H1 (cell line): ENCODE measurements at regions of chr10 and their contacts with region 1.

Region 1: DNA sequence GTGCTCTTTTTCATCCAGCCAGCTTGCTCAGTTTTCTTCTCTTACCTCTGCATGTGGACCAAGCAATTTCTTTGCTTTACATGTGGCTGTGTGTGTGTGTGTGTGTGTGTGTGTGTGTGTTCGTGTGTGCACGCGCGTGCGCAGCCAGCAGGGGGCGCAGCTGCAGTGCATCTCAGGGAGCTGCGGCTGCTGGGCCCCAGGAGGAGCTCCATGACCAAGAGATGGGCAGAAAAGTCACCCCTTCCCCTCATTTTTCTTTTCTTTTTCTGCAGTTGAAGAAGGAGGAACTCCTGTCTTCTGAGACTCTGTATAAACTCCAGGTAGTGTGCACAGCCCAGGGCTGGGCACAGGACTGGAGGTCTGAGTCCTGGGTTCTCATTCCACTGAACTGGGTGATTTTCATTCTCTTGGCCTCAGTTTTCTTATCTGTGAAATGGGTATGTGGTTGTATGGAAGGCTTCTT is 41.8 kb downstream of the BLNK start:
- DNase-seq: peak; percentile 61 to 86
- H3K4me3 ChIP-seq: no peak overlapping the region
- H3K27ac ChIP-seq: no peak overlapping the region
- H3K4me1 ChIP-seq: peaks cover 0 to 2% (median under 1%) of the 10 kb centered on the region in 4 experiments; a peak in 2 of 7 replicates
- H3K27me3 ChIP-seq: no peaks in the 10 kb centered on the region
- CTCF ChIP-seq: peak; percentile 94 to 99 (median 97)
- EP300 ChIP-seq: 0 out of 3 replicates have a peak, but pooled peaks of 1 of the 2 experiments have one; percentile 15
- POLR2A ChIP-seq: no peak
- RAD21 ChIP-seq: peak; percentile 90 to 92

Region 2: GRCh38 chr10:96208271-96208670 is 21.3 kb before region 1 on chr10:
- CTCF ChIA-PET with region 1: interaction called, 29 read pairs
- POLR2A ChIA-PET with region 1: no interaction called
- DNase-seq: no peak
- H3K4me3 ChIP-seq: no peak overlapping the region
- H3K27ac ChIP-seq: no peak overlapping the region
- H3K4me1 ChIP-seq: peaks cover 4 to 7% (median 5%) of the 10 kb centered on the region in 4 experiments; a peak in 6 of 7 replicates
- H3K27me3 ChIP-seq: no peaks in the 10 kb centered on the region
- CTCF ChIP-seq: no peak
- EP300 ChIP-seq: no peak
- POLR2A ChIP-seq: no peak
- RAD21 ChIP-seq: no peak

Region 3: DNA sequence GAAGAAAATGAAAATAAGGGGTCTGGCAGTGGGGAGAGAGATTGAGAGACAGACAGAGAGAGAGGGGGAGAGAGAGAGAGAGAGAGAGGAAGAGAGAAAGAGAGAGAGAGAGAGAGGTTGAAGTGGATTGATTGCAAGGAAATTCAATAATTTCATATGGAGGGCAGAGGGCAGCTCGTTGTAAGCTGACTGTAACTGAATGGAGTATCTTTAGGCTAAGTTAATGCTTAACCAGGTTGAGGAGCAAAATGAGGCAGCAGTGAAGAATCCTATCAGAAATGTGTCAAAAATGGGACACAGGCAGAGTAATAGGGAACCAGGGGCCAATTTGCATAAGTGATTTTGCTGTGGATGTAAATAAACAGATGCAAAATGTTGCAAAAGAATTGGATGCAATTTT is 20.8 kb after region 1 on chr10:
- CTCF ChIA-PET with region 1: interaction called, 16 read pairs
- POLR2A ChIA-PET with region 1: interaction called, 3 read pairs
- DNase-seq: no peak
- H3K4me3 ChIP-seq: no peak overlapping the region
- H3K27ac ChIP-seq: no peak overlapping the region
- H3K4me1 ChIP-seq: no peaks in the 10 kb centered on the region; a peak in 1 of 7 replicates
- H3K27me3 ChIP-seq: no peaks in the 10 kb centered on the region; a peak in 1 of 7 replicates
- CTCF ChIP-seq: no peak
- EP300 ChIP-seq: no peak
- POLR2A ChIP-seq: no peak
- RAD21 ChIP-seq: no peak

Region 4: DNA sequence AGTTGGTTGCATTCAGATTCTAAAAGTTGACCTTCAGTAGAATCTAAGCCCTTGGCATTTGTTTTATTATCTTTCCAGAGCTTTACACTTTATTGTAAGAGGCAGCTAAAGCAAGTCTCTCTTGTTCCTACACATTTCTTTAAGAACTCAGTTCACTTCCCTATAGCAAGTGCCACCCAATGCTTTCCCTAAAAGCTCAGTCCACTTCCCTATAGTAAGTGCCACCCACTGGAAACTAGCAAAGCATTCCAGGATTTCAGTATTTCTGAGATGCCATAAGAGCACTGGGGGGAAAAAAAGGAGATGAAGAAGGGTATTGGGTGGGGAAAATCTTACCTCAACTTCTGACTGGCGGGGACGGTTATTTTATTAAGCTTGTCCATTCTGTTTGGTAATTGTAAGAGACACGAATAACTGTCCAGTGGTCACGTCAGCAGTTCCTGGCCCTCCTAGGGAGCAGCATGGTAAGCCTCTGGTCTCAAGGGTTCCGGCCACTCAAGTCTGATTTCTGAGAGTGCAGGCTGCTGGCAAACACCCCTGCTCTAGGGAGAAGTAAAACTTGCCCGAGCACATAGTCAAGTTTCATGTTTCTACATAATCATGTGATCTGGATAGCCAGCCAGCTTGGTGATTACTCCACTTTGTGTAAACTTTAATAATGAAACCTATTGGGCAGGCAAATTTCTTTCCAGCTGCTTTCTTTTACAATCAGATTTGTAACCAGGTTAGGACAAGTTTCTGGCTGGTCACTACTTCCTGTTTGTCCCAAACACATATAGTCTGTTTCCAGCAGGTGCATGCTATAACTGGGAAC is 41.6 kb after region 1 on chr10 and contains the start of gene BLNK:
- CTCF ChIA-PET with region 1: interaction called, 26 read pairs
- POLR2A ChIA-PET with region 1: interaction called, 3 read pairs
- DNase-seq: no peak
- H3K4me3 ChIP-seq: no peak within 1 kb of the TSS
- H3K27ac ChIP-seq: no peak within 1 kb of the TSS
- H3K4me1 ChIP-seq: no peaks in the 10 kb centered on the region
- H3K27me3 ChIP-seq: no peaks in the 10 kb centered on the region
- CTCF ChIP-seq: no peak
- EP300 ChIP-seq: no peak
- POLR2A ChIP-seq: no peak
- RAD21 ChIP-seq: no peak
- total RNA-seq, gene BLNK: not detected in 2 replicates

Region 5: DNA sequence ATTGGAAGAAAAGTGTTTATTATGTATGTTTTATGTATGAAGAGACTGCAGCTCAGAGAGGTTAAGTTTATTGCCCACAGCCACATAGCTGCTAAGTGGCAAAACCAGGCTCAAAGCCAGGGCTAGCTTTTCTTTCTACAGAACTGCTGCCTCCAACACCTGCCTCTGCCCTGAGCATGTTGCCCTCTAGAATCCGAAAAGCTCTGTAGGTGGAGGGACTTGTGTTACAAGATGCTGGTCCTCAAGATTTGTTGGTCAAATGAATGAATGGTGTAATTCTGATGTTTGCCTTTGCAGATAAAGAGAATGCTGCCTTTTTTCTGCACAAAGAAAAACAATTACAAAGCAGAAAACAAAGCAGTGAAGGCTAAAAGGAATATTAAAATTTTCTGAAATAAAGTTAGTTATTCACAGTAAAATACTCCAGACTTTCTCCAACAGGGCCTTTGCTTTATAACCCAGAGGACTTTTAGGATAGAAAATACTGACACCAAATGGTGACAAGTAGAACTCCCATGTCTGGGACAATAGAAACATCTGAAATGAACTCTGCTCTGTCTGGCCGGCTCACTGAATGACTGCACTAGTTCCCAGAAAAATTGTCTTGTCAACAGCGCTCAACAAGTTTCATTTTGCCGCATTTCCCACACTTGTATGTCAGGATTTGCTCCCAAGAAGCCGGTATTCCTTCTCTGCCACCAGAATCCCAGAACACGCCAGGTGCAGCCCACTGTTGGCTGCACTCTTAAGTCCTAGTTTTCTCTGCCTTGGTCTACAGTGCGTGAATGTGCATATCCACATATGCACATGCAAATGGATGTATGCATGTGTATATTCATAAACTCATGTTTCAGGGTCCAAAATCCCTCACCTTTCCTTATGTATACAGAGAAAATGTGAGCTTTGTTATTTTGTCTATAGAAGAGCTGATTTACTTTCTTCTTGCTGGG is 63.6 kb after region 1 on chr10:
- CTCF ChIA-PET with region 1: interaction called, 151 read pairs
- POLR2A ChIA-PET with region 1: interaction called, 3 read pairs
- DNase-seq: no peak
- H3K4me3 ChIP-seq: no peak overlapping the region
- H3K27ac ChIP-seq: no peak overlapping the region
- H3K4me1 ChIP-seq: no peaks in the 10 kb centered on the region
- H3K27me3 ChIP-seq: no peaks in the 10 kb centered on the region
- CTCF ChIP-seq: peak in 2 of 3 experiments; percentile 58 to 61; a peak in 3 of 4 replicates
- EP300 ChIP-seq: no peak
- POLR2A ChIP-seq: no peak
- RAD21 ChIP-seq: peak; percentile 68 to 82

Region 6: GRCh38 chr10:96306516-96306915 is 76.9 kb after region 1 on chr10:
- CTCF ChIA-PET with region 1: interaction called, 10 read pairs
- POLR2A ChIA-PET with region 1: no interaction called
- DNase-seq: no peak
- H3K4me3 ChIP-seq: no peak overlapping the region
- H3K27ac ChIP-seq: no peak overlapping the region
- H3K4me1 ChIP-seq: peaks cover 3 to 24% (median 22%) of the 10 kb centered on the region in 4 experiments
- H3K27me3 ChIP-seq: no peaks in the 10 kb centered on the region
- CTCF ChIP-seq: no peak
- EP300 ChIP-seq: no peak
- POLR2A ChIP-seq: no peak
- RAD21 ChIP-seq: no peak

Region 7: DNA sequence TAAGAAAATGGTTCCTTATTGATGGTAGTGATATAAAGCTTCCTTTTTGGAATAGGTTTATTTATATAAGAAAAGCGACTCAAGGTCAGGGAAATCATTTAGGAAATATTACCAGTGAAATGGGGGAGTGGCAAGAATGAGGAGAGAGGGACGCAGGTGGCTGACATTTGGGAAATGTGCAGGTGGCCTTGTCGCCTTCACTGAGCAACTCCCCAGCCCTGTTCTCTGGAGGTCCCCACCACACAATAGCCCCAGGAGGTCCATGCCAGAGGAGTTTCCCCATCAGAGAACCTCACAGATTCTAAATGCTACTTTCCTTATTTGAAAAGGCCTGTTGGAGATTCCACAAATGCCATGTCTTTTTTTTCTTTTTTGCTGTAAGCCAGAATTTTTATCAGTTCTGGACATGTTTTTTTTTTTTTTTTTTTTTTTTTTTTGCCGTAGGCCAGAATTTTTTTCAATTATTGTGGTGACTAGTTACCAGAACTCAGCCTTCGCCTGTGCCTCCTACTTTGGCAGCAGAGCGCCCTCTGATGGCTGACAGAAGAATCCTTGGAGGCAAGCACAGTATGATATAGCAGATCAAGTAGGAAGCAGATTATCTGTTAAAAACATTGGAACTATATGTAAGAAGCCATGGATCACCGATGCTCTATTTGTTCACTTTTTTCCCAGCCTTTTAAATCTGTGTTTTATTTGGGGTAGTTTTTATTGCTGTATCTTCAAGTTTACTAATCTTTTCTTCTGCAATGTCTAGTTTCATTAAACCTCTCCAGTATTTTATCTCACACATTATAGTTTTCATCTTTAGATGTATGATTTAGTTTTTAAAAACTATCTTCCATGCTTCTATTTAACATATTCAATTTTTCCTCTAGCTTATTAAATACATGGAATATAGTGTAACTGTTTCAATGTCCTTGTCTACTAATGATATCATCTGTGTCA is 110.6 kb after region 1 on chr10:
- CTCF ChIA-PET with region 1: interaction called, 79 read pairs
- POLR2A ChIA-PET with region 1: interaction called, 3 read pairs
- DNase-seq: peak in 1 of 2 experiments; percentile 74
- H3K4me3 ChIP-seq: no peak overlapping the region
- H3K27ac ChIP-seq: no peak overlapping the region
- H3K4me1 ChIP-seq: peaks cover 0 to 14% (median 10%) of the 10 kb centered on the region in 4 experiments; a peak in 6 of 7 replicates
- H3K27me3 ChIP-seq: peaks cover 0 to 1% (median 0%) of the 10 kb centered on the region in 4 experiments; a peak in 1 of 7 replicates
- CTCF ChIP-seq: peak; percentile 71 to 80 (median 80)
- EP300 ChIP-seq: no peak
- POLR2A ChIP-seq: no peak
- RAD21 ChIP-seq: peak; percentile 70 to 75

Region 8: GRCh38 chr10:96555330-96555729 is 325.7 kb after region 1 on chr10:
- CTCF ChIA-PET with region 1: no interaction called
- POLR2A ChIA-PET with region 1: no interaction called
- DNase-seq: no peak
- H3K4me3 ChIP-seq: no peak overlapping the region
- H3K27ac ChIP-seq: no peak overlapping the region
- H3K4me1 ChIP-seq: no peaks in the 10 kb centered on the region
- H3K27me3 ChIP-seq: no peaks in the 10 kb centered on the region
- CTCF ChIP-seq: no peak
- EP300 ChIP-seq: no peak
- POLR2A ChIP-seq: no peak
- RAD21 ChIP-seq: no peak

Region 9: DNA sequence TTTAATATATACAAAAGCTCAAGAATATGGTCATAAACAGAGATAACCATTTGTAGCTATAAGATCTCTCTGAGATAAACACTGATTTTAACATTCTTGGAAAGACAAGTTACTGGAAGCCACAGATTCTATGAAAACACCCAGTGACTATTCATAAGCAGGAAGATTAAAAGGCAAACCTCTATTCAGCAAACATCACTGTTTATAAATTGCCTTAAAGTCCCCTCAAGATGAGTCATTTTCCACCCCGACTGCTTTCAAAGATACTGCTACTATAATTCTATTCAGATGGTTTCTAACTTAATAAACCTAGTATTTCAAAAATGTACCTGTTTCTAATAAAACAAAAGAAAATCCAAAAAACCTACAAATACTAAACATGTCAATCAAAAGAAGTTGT is 336.2 kb after region 1 on chr10:
- CTCF ChIA-PET with region 1: no interaction called
- POLR2A ChIA-PET with region 1: no interaction called
- DNase-seq: no peak
- H3K4me3 ChIP-seq: no peak overlapping the region
- H3K27ac ChIP-seq: no peak overlapping the region
- H3K4me1 ChIP-seq: no peaks in the 10 kb centered on the region
- H3K27me3 ChIP-seq: no peaks in the 10 kb centered on the region
- CTCF ChIP-seq: no peak
- EP300 ChIP-seq: no peak
- POLR2A ChIP-seq: no peak
- RAD21 ChIP-seq: no peak